IMR-90 (cell line): ENCODE measurements at regions of chrX and their contacts with region 1.

Region 1: GRCh38 chrX:150989420-150989819 is 6.3 kb downstream of the HMGB3 start:
- DNase-seq: no peak
- ATAC-seq: no peak
- H3K4me3 ChIP-seq: no peak overlapping the region
- H3K27ac ChIP-seq: no peak overlapping the region
- H3K4me1 ChIP-seq: no peaks in the 10 kb centered on the region
- H3K27me3 ChIP-seq: no peaks in the 10 kb centered on the region
- CTCF ChIP-seq: no peak
- POLR2A ChIP-seq: no peak
- RAD21 ChIP-seq: no peak

Region 2: DNA sequence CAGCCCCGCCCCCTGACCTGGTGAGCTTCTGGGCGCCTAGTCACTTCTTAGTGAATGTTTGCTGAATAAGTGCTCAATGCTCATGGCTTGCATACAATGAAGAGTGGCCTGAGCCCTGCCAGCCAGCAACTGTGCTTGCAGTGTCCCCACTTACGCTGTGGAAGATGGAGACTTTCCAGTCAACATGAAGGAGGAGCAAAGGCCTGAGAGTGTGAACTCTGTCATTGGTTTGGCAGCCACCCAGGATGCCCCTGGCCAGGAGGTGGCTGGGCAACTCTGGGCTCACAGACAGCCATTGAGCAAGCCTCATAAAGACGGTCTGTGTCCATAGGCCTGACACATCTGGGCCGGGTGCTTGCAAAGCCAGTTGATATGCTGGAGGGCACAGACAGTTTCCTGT is 698.4 kb before region 1 on chrX:
- CTCF ChIA-PET with region 1: no interaction called
- POLR2A ChIA-PET with region 1: no interaction called
- dilution Hi-C with region 1: no loop called
- in situ Hi-C with region 1: no loop called
- intact Hi-C with region 1: no loop called
- DNase-seq: no peak
- ATAC-seq: no peak
- H3K4me3 ChIP-seq: no peak overlapping the region
- H3K27ac ChIP-seq: no peak overlapping the region
- H3K4me1 ChIP-seq: no peaks in the 10 kb centered on the region
- H3K27me3 ChIP-seq: no peaks in the 10 kb centered on the region; the same call in 1 of the 2 replicates
- CTCF ChIP-seq: no peak
- POLR2A ChIP-seq: no peak
- RAD21 ChIP-seq: no peak

Region 3: DNA sequence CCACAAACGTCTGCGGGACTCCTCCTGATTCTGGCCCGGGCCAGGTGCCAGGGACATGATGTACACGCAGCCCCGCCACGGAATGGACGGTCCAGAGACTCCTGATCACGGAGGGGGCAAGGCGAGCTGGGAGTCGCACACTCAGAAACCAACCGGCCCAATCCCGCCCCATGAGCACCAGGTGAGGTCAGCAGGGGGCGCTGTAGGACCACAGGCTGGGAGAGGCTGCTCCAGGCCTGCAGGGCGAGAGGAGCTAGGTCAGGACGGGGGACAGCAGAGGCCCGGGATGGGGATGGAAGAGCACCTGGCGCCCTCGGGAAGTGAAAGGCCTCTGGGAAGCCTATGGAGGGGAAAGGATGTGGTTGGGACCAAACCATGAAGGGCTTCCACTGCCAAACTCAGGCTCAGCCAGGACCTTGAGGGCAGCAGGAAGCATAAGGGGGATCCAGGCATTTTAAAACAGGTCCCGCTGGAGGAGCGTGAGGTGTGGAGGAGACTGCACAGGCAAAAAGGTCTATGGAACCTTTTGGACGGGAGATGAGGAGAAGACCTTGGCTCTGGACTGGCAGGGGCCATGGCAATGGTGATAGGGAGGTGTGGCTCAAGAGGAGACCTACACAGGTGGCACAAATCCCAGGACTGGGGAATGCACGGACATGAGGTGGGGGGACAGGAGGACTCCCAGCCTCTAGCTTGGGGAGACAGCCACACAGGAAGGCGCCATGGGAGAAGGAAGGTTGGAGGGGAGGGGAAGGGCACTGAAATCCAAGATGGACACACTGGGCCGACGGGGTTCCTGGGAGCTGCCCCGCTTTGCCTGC is 217.1 kb before region 1 on chrX:
- CTCF ChIA-PET with region 1: no interaction called
- POLR2A ChIA-PET with region 1: no interaction called
- dilution Hi-C with region 1: no loop called
- in situ Hi-C with region 1: loop called (anchors 10 kb)
- intact Hi-C with region 1: loop called (anchors 5 kb)
- DNase-seq: peak; percentile 45
- ATAC-seq: peak; percentile 81
- H3K4me3 ChIP-seq: no peak overlapping the region
- H3K27ac ChIP-seq: no peak overlapping the region
- H3K4me1 ChIP-seq: peaks cover 3% of the 10 kb centered on the region
- H3K27me3 ChIP-seq: no peaks in the 10 kb centered on the region
- CTCF ChIP-seq: peak; percentile 81
- POLR2A ChIP-seq: no peak
- RAD21 ChIP-seq: peak; percentile 91

Region 4: GRCh38 chrX:151424505-151424904 is 435.1 kb after region 1 on chrX:
- CTCF ChIA-PET with region 1: no interaction called
- POLR2A ChIA-PET with region 1: no interaction called
- dilution Hi-C with region 1: no loop called
- in situ Hi-C with region 1: no loop called
- intact Hi-C with region 1: no loop called
- DNase-seq: no peak
- ATAC-seq: no peak
- H3K4me3 ChIP-seq: no peak overlapping the region
- H3K27ac ChIP-seq: no peak overlapping the region
- H3K4me1 ChIP-seq: no peaks in the 10 kb centered on the region
- H3K27me3 ChIP-seq: no peaks in the 10 kb centered on the region
- CTCF ChIP-seq: no peak
- POLR2A ChIP-seq: no peak
- RAD21 ChIP-seq: no peak